ENCODE measurements at regions of chr6 and their contacts with region 1.

Region 1: GRCh38 chr6:153074761-153075160 is 56.3 kb downstream of the RGS17 start:
- DNase-seq: no peak
- H3K4me3 ChIP-seq: no peak overlapping the region
- H3K27ac ChIP-seq: no peak overlapping the region
- H3K4me1 ChIP-seq: peaks cover 0 to 4% of the 10 kb centered on the region in 2 donors
- H3K27me3 ChIP-seq: no peaks in the 10 kb centered on the region
- CTCF ChIP-seq: no peak

Region 2: GRCh38 chr6:152859225-152859624 is 215.5 kb before region 1 on chr6:
- intact Hi-C with region 1: no loop called
- DNase-seq: no peak
- H3K4me3 ChIP-seq: no peak overlapping the region
- H3K27ac ChIP-seq: no peak overlapping the region
- H3K4me1 ChIP-seq: no peaks in the 10 kb centered on the region
- H3K27me3 ChIP-seq: no peaks in the 10 kb centered on the region
- CTCF ChIP-seq: no peak

Region 3: GRCh38 chr6:153117986-153118879 is 43.5 kb after region 1 on chr6:
- intact Hi-C with region 1: loop called (anchors 5 kb)
- DNase-seq: no peak
- H3K4me3 ChIP-seq: no peak overlapping the region
- H3K27ac ChIP-seq: no peak overlapping the region
- H3K4me1 ChIP-seq: no peaks in the 10 kb centered on the region
- H3K27me3 ChIP-seq: no peaks in the 10 kb centered on the region
- CTCF ChIP-seq: no peak

Measured in ascending aorta (tissue), 2 donors.